MCF 10A (cell line): ENCODE measurements at regions of chr1 and their contacts with region 1.

Region 1: GRCh38 chr1:233061265-233061664 is 110.9 kb downstream of the NTPCR start:
- DNase-seq: no peak
- H3K4me3 Mint-ChIP-seq: no peak overlapping the region
- H3K27ac Mint-ChIP-seq: no peak overlapping the region
- H3K4me1 Mint-ChIP-seq: peaks cover 5% of the 10 kb centered on the region
- H3K27me3 Mint-ChIP-seq: no peaks in the 10 kb centered on the region
- CTCF ChIP-seq: no peak

Region 2: DNA sequence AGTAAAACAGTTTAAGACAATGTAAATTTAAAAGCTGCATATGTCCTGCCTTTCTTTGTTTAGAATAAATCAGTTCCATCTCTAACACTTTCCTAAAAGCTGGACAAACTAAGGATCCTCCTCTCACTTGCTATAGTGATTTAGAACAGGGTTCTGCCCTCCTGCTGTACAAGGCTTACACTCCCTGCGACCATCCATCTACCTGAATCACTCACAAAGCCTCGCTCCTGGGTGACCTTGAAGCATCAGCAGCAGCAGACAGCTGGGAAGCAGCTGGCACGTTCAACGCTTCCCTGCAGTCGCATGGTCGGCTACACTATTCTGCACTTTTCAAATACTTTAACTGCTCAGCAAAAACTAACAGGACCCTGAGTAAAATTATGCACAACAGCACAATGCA is 17.1 kb after region 1 on chr1:
- CTCF ChIA-PET with region 1: interaction called, 3 read pairs
- POLR2A ChIA-PET with region 1: interaction called, 10 read pairs
- intact Hi-C with region 1: no loop called
- DNase-seq: no peak
- H3K4me3 Mint-ChIP-seq: no peak overlapping the region
- H3K27ac Mint-ChIP-seq: no peak overlapping the region
- H3K4me1 Mint-ChIP-seq: peaks cover 7% of the 10 kb centered on the region
- H3K27me3 Mint-ChIP-seq: no peaks in the 10 kb centered on the region
- CTCF ChIP-seq: no peak